CD4-positive, alpha-beta memory T cell (primary cell): ENCODE measurements at regions of chr3 and their contacts with region 1.

Region 1: DNA sequence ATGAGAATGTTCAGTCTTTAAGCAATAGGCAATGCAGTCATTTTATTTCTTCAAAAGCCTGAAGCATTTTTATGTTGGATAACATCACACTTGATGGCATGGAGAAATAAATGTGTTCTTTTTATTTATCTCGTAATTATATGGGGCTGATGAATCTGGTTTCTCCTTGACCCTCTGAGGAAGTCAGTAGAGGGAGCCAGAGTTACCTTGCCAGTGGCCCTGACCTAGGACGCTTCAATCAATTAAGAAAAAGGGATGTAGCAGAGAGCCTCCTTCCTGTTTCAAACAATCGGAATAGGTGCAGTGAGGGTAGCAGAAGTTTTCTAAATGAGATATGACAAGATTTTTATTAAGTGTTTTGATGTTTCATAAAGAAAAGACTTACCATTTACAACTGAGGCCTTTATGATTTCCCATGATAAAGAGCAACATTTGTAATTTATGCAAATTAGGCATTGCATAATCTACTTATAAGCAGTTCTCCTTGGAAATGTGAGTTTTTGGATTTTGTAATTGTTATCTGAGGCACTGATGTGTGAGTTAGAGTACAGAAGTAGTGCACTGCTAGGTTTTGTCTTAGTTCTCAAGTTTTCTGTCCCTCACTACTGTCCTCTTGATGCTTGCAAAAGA is 129.1 kb downstream of the RAP2B start:
- DNase-seq: peak in 3 of 5 donors; percentile 15 to 21 (median 21)
- H3K4me3 ChIP-seq: no peak overlapping the region
- H3K4me3 Mint-ChIP-seq: peak overlapping the region in 3 of 8 donors; percentile 1 to 46 (median 35)
- H3K27ac ChIP-seq: no peak overlapping the region
- H3K27ac Mint-ChIP-seq: peak overlapping the region in 2 of 7 donors; percentile 50 to 71
- H3K4me1 ChIP-seq: peaks cover 50% of the 10 kb centered on the region
- H3K4me1 Mint-ChIP-seq: peaks cover 35 to 49% (median 43%) of the 10 kb centered on the region in 4 donors
- H3K27me3 ChIP-seq: no peaks in the 10 kb centered on the region
- H3K27me3 Mint-ChIP-seq: no peaks in the 10 kb centered on the region

Region 2: GRCh38 chr3:152183473-152183872 is 1107.7 kb before region 1 on chr3:
- CTCF ChIA-PET with region 1: no interaction called
- POLR2A ChIA-PET with region 1: no interaction called
- intact Hi-C with region 1: no loop called
- DNase-seq: peak; percentile 43 to 56 (median 55)
- H3K4me3 ChIP-seq: no peak overlapping the region
- H3K4me3 Mint-ChIP-seq: peak overlapping the region in 7 of 8 donors; percentile 7 to 50 (median 32)
- H3K27ac ChIP-seq: no peak overlapping the region
- H3K27ac Mint-ChIP-seq: peak overlapping the region in 5 of 7 donors; percentile 8 to 83 (median 61)
- H3K4me1 ChIP-seq: peaks cover 53% of the 10 kb centered on the region
- H3K4me1 Mint-ChIP-seq: peaks cover 29 to 48% (median 39%) of the 10 kb centered on the region in 4 donors
- H3K27me3 ChIP-seq: no peaks in the 10 kb centered on the region
- H3K27me3 Mint-ChIP-seq: no peaks in the 10 kb centered on the region

Region 3: GRCh38 chr3:153043729-153044328 is 247.3 kb before region 1 on chr3:
- CTCF ChIA-PET with region 1: interaction called, 83 read pairs
- POLR2A ChIA-PET with region 1: interaction called, 8 read pairs
- intact Hi-C with region 1: loop called (anchors 1 kb)
- DNase-seq: no peak
- H3K4me3 ChIP-seq: no peak overlapping the region
- H3K4me3 Mint-ChIP-seq: no peak overlapping the region
- H3K27ac ChIP-seq: no peak overlapping the region
- H3K27ac Mint-ChIP-seq: no peak overlapping the region
- H3K4me1 ChIP-seq: no peaks in the 10 kb centered on the region
- H3K4me1 Mint-ChIP-seq: peaks cover 0 to 5% (median 4%) of the 10 kb centered on the region in 4 donors
- H3K27me3 ChIP-seq: no peaks in the 10 kb centered on the region
- H3K27me3 Mint-ChIP-seq: peaks cover 0 to 1% of the 10 kb centered on the region in 2 donors

Region 4: GRCh38 chr3:153221748-153222162 is 69.4 kb before region 1 on chr3:
- CTCF ChIA-PET with region 1: interaction called, 33 read pairs
- POLR2A ChIA-PET with region 1: interaction called, 43 read pairs
- intact Hi-C with region 1: loop called (anchors 1 kb)
- DNase-seq: peak; percentile 86 to 95 (median 90)
- H3K4me3 ChIP-seq: peak overlapping the region; percentile 12 to 23
- H3K4me3 Mint-ChIP-seq: peak overlapping the region; percentile 41 to 86 (median 76)
- H3K27ac ChIP-seq: peak overlapping the region; percentile 67
- H3K27ac Mint-ChIP-seq: peak overlapping the region; percentile 90 to 99 (median 98)
- H3K4me1 ChIP-seq: peaks cover 84% of the 10 kb centered on the region
- H3K4me1 Mint-ChIP-seq: peaks cover 50 to 72% (median 60%) of the 10 kb centered on the region in 4 donors
- H3K27me3 ChIP-seq: no peaks in the 10 kb centered on the region
- H3K27me3 Mint-ChIP-seq: no peaks in the 10 kb centered on the region

Region 5: GRCh38 chr3:153330901-153331300 is 39.7 kb after region 1 on chr3:
- CTCF ChIA-PET with region 1: no interaction called
- POLR2A ChIA-PET with region 1: no interaction called
- intact Hi-C with region 1: no loop called
- DNase-seq: no peak
- H3K4me3 ChIP-seq: no peak overlapping the region
- H3K4me3 Mint-ChIP-seq: no peak overlapping the region
- H3K27ac ChIP-seq: no peak overlapping the region
- H3K27ac Mint-ChIP-seq: no peak overlapping the region
- H3K4me1 ChIP-seq: no peaks in the 10 kb centered on the region
- H3K4me1 Mint-ChIP-seq: peaks cover 0 to 3% (median 0%) of the 10 kb centered on the region in 4 donors
- H3K27me3 ChIP-seq: no peaks in the 10 kb centered on the region
- H3K27me3 Mint-ChIP-seq: peaks cover 0 to 1% of the 10 kb centered on the region in 2 donors

Region 6: GRCh38 chr3:153350420-153350819 is 59.2 kb after region 1 on chr3:
- CTCF ChIA-PET with region 1: no interaction called
- POLR2A ChIA-PET with region 1: no interaction called
- intact Hi-C with region 1: no loop called
- DNase-seq: no peak
- H3K4me3 ChIP-seq: no peak overlapping the region
- H3K4me3 Mint-ChIP-seq: no peak overlapping the region
- H3K27ac ChIP-seq: no peak overlapping the region
- H3K27ac Mint-ChIP-seq: no peak overlapping the region
- H3K4me1 ChIP-seq: no peaks in the 10 kb centered on the region
- H3K4me1 Mint-ChIP-seq: no peaks in the 10 kb centered on the region
- H3K27me3 ChIP-seq: no peaks in the 10 kb centered on the region
- H3K27me3 Mint-ChIP-seq: peaks cover 0 to 1% of the 10 kb centered on the region in 2 donors

Region 7: DNA sequence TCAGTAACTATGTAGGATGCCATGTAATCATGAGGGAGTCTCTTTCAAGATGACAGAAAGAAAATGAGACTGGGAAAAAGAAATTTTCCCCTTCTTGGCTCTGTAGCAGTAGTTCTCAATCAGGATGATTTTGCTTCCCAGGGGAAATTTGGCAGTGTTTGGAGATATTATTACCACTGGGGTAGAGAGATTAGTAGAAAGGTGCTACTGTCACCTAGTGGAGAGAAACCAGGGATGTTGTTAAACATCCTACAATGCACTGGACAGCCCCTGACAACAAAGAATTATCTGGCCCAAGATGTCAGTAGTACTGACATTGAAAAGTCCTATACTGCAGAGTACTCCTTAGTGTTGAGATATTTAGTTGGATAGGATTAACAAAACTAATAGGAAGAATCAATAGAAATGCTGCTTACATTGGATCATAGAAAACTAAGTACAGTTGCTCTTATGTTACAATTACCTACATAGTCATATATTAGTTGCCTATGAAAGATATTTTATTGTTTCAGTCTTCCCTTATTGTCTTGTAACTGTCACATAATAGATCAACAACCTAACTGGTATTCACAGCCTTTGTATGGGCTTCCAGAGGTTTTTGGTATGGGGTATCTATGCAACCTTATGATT is 304.1 kb after region 1 on chr3:
- CTCF ChIA-PET with region 1: interaction called, 6 read pairs
- POLR2A ChIA-PET with region 1: interaction called, 3 read pairs
- intact Hi-C with region 1: loop called (anchors 2 kb)
- DNase-seq: peak in 4 of 5 donors; percentile 13 to 24 (median 16)
- H3K4me3 ChIP-seq: no peak overlapping the region
- H3K4me3 Mint-ChIP-seq: no peak overlapping the region
- H3K27ac ChIP-seq: no peak overlapping the region
- H3K27ac Mint-ChIP-seq: peak overlapping the region in 1 of 7 donors; percentile 34
- H3K4me1 ChIP-seq: no peaks in the 10 kb centered on the region
- H3K4me1 Mint-ChIP-seq: peaks cover 0 to 6% (median 5%) of the 10 kb centered on the region in 4 donors
- H3K27me3 ChIP-seq: no peaks in the 10 kb centered on the region
- H3K27me3 Mint-ChIP-seq: no peaks in the 10 kb centered on the region

Region 8: DNA sequence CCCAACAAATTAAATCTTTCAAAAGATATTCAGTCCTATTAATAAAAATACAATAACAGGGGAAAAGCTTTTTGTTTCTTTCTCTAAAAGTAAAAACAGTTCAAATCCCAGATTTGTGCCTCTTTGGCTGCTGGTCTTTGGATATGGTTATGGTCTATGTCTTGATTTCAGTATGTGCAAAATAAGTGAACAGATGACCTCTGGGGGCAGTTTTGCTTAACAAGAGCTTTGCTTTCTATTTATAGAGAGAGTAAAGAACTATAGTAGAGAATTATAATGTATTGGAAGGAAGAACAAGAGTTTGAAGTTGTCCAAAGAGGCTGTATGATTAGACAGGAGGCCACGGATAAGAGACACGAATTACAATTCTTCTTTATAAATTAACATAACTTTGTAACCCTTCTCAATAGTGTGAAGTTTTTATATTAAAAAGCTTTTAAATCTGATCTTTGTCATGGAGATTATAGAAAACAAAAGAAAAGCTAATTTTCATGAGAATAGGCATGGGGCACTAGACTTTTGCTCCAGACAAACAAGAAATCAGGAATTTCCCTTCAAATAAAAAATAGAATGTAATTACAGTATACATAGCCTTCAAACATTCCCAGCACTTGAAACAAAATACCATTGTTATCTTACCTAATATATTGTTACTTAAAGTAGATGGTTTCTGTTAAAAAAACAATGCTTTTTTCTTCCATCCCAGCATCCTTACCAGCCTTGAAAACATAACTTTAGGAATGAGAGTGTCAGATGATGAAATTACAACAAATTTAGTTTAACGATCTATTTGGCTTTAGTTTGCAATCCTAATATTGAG is 397.3 kb after region 1 on chr3:
- CTCF ChIA-PET with region 1: interaction called, 7 read pairs
- POLR2A ChIA-PET with region 1: no interaction called
- intact Hi-C with region 1: loop called (anchors 5 kb)
- DNase-seq: no peak
- H3K4me3 ChIP-seq: no peak overlapping the region
- H3K4me3 Mint-ChIP-seq: no peak overlapping the region
- H3K27ac ChIP-seq: no peak overlapping the region
- H3K27ac Mint-ChIP-seq: no peak overlapping the region
- H3K4me1 ChIP-seq: no peaks in the 10 kb centered on the region
- H3K4me1 Mint-ChIP-seq: peaks cover 0 to 3% (median 1%) of the 10 kb centered on the region in 4 donors
- H3K27me3 ChIP-seq: no peaks in the 10 kb centered on the region
- H3K27me3 Mint-ChIP-seq: peaks cover 0 to 2% of the 10 kb centered on the region in 2 donors

Region 9: DNA sequence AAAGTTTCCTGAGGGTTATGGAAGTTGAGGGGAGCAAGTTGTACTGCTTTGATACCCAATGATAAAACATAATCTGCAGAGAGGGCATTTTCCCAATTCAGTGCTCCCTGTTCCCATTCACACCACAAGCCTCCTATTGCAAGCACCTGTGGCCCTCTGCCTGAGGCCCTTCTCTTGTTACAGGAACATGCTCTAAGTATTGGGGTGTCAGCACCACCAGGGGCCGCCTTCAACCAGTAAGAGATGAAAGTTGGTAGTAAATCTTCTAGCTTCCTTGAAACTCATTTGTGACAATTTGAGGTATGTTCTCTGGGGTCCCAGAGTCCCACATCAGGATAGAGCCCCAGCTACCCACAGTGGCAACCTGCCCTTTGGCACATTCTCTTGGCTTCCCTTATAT is 564.6 kb after region 1 on chr3:
- CTCF ChIA-PET with region 1: no interaction called
- POLR2A ChIA-PET with region 1: no interaction called
- intact Hi-C with region 1: no loop called
- DNase-seq: no peak
- H3K4me3 ChIP-seq: no peak overlapping the region
- H3K4me3 Mint-ChIP-seq: no peak overlapping the region
- H3K27ac ChIP-seq: no peak overlapping the region
- H3K27ac Mint-ChIP-seq: no peak overlapping the region
- H3K4me1 ChIP-seq: no peaks in the 10 kb centered on the region
- H3K4me1 Mint-ChIP-seq: no peaks in the 10 kb centered on the region
- H3K27me3 ChIP-seq: no peaks in the 10 kb centered on the region
- H3K27me3 Mint-ChIP-seq: peaks cover 1 to 2% of the 10 kb centered on the region in 2 donors

Region 10: GRCh38 chr3:154252759-154253638 is 961.8 kb after region 1 on chr3:
- CTCF ChIA-PET with region 1: no interaction called
- POLR2A ChIA-PET with region 1: no interaction called
- intact Hi-C with region 1: loop called (anchors 5 kb)
- DNase-seq: peak; percentile 32 to 66 (median 38)
- H3K4me3 ChIP-seq: no peak overlapping the region
- H3K4me3 Mint-ChIP-seq: no peak overlapping the region
- H3K27ac ChIP-seq: no peak overlapping the region
- H3K27ac Mint-ChIP-seq: peak overlapping the region in 4 of 7 donors; percentile 2 to 52 (median 38)
- H3K4me1 ChIP-seq: no peaks in the 10 kb centered on the region
- H3K4me1 Mint-ChIP-seq: peaks cover 0 to 4% (median 1%) of the 10 kb centered on the region in 4 donors
- H3K27me3 ChIP-seq: no peaks in the 10 kb centered on the region
- H3K27me3 Mint-ChIP-seq: no peaks in the 10 kb centered on the region